CD4-positive, alpha-beta T cell (primary cell): ENCODE measurements at regions of chr19 and their contacts with region 1.

Region 1: DNA sequence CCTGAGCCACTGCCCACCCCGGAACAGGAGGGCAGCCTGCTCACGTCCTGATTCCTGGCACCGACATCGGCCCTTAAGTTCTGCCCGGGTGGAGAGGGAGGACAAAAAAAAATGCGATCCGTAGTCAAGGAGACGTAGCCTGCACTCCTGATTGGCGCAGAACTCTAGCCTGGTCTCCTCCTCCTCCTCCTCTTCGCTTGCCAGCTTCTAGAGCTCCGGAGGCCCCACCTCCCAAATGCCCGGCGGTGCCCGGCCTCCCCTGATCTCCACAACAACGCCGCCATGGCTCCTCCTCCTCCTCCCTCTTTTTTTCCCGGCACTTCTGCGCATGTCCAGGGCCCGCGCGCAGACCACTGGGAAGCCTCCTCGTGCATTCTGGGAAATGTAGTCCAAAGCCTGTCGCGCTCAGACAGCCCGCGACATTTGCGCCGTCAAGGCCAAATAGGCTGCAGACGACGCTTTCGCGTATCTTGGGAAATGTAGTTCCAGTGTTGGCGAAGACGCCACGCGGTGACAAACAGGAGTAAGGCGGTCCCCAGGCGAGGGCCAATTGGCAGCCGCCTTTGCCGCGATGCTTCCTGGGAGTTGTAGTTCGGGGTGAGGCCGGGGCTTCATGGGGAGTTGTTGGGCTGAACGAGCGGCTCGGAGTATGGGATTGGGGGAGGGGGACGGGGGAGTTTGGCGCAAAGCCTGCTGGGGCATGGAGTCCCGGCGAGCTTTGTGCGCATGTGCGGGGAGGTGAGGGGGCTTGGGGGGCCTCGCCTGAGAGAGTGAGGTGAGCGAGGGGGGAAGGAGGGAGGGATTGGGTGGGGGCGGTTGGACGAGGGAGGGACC is at the start of gene ZNF444:
- DNase-seq: peak; percentile 98 to 100 (median 99)
- ATAC-seq: peak; percentile 83
- H3K4me3 ChIP-seq: peak within 1 kb of the TSS; percentile 70
- H3K4me3 Mint-ChIP-seq: peak within 1 kb of the TSS; percentile 96
- H3K27ac ChIP-seq: peak within 1 kb of the TSS; percentile 74 to 78
- H3K27ac Mint-ChIP-seq: peak within 1 kb of the TSS; percentile 85
- H3K4me1 ChIP-seq: peaks cover 35% of the 10 kb centered on the region
- H3K4me1 Mint-ChIP-seq: peaks cover 37% of the 10 kb centered on the region
- H3K27me3 ChIP-seq: no peaks in the 10 kb centered on the region
- H3K27me3 Mint-ChIP-seq: no peaks in the 10 kb centered on the region
- CTCF ChIP-seq: no peak
- total RNA-seq, gene ZNF444: 13.5 TPM

Region 2: DNA sequence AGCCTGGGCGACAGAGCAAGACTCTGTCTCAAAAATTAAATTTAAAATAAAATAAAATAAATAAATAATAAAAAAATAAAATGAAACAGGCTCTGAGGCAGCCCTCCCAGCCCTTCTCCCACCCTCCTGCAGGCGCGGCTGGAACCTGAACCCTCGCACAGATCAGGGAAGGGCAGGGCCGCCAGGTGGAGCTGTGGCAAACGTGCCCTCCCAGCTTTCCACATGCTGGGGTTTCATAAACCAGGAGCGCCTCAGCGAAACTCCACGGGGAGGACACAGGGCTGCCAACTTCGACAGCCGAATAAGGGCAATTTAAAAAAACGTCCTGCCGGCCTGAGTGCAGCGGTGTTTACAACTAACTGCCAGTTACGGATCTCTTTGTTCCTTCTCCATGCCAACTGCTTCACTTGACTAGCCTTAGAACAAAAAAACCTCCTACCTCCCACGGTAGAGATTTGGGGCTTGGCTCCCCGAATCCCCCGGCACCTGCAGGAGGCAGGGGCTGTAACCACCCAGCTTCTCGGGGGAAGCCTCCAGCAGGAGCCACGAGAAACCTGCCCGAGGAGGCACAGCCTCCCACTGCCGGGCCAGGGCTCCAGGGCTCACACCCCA is 35.6 kb before region 1 on chr19:
- CTCF ChIA-PET with region 1: interaction called, 3 read pairs
- POLR2A ChIA-PET with region 1: no interaction called
- intact Hi-C with region 1: loop called in 1 of 2 experiments (anchors 5 kb)
- DNase-seq: peak; percentile 23 to 76 (median 52)
- ATAC-seq: peak; percentile 89
- H3K4me3 ChIP-seq: no peak overlapping the region
- H3K4me3 Mint-ChIP-seq: no peak overlapping the region
- H3K27ac ChIP-seq: no peak overlapping the region
- H3K27ac Mint-ChIP-seq: peak overlapping the region; percentile 54
- H3K4me1 ChIP-seq: peaks cover 45% of the 10 kb centered on the region
- H3K4me1 Mint-ChIP-seq: peaks cover 35% of the 10 kb centered on the region
- H3K27me3 ChIP-seq: no peaks in the 10 kb centered on the region
- H3K27me3 Mint-ChIP-seq: no peaks in the 10 kb centered on the region
- CTCF ChIP-seq: peak; percentile 71

Region 3: GRCh38 chr19:56111601-56112312 is 29.0 kb before region 1 on chr19:
- CTCF ChIA-PET with region 1: no interaction called
- POLR2A ChIA-PET with region 1: interaction called, 8 read pairs
- intact Hi-C with region 1: loop called (anchors 1 to 5 kb)
- DNase-seq: peak in 9 of 14 experiments; percentile 20 to 81 (median 46)
- ATAC-seq: peak; percentile 98
- H3K4me3 ChIP-seq: no peak overlapping the region
- H3K4me3 Mint-ChIP-seq: peak overlapping the region; percentile 79
- H3K27ac ChIP-seq: peak overlapping the region in 1 of 2 donors; percentile 48
- H3K27ac Mint-ChIP-seq: peak overlapping the region; percentile 91
- H3K4me1 ChIP-seq: peaks cover 72% of the 10 kb centered on the region
- H3K4me1 Mint-ChIP-seq: peaks cover 64% of the 10 kb centered on the region
- H3K27me3 ChIP-seq: no peaks in the 10 kb centered on the region
- H3K27me3 Mint-ChIP-seq: no peaks in the 10 kb centered on the region
- CTCF ChIP-seq: no peak

Region 4: DNA sequence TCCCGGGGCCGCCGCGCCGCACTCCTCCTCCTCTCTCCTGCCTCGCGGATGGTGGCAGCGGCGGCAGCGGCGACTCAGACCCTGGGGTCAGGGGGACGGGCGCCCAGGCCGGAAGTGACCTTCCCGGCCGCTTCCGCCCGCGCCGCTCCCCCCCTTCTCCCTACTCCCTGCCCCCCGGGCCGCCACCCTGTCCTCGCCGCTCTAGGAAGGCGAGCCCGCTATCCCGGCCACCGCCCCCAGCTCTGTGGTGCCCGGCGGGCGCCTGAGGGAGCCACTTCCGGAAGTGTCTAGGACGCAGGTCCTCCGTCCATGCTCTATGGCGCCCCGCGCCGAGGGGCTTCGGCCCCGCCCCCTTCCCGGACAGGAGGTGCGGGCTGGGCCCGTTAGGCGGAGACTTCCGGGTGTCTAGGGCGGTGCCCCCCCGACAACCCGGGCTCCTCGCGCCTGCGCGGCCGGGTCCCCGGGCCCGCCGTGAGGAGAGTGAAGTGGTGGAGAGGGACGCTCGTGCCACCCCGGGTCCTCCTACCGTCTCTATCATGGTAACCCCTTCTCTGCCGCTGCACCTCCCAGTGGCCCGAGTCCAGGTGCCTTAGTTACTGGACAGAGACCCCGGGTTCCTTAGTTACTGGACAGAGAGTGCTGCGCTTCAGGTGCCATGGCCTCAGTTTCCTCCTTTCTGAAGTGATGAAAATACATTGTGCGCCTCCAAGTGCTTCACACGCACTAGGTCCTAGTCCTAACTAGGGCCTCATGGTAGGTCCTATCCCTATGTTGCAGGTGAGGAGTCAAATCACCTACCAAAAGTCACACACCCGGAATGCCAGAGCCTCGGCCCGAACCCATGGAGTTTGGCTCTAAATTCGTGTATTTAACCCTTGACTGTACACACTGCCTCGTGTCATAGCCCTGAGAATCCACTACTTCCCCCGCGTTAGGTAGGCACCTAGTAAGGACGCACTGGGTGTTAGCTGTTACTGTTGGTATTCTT is 19.3 kb before region 1 on chr19 and contains the start of gene ZNF787:
- CTCF ChIA-PET with region 1: no interaction called
- POLR2A ChIA-PET with region 1: interaction called, 37 read pairs
- intact Hi-C with region 1: loop called (anchors 1 kb)
- DNase-seq: peak; percentile 93 to 99 (median 97)
- ATAC-seq: peak; percentile 84
- H3K4me3 ChIP-seq: peak within 1 kb of the TSS; percentile 73
- H3K4me3 Mint-ChIP-seq: peak within 1 kb of the TSS; percentile 98
- H3K27ac ChIP-seq: peak within 1 kb of the TSS; percentile 92 to 98
- H3K27ac Mint-ChIP-seq: peak within 1 kb of the TSS; percentile 96
- H3K4me1 ChIP-seq: peaks cover 52% of the 10 kb centered on the region
- H3K4me1 Mint-ChIP-seq: peaks cover 73% of the 10 kb centered on the region
- H3K27me3 ChIP-seq: no peaks in the 10 kb centered on the region
- H3K27me3 Mint-ChIP-seq: no peaks in the 10 kb centered on the region
- CTCF ChIP-seq: no peak
- total RNA-seq, gene ZNF787: 11.4 to 11.5 TPM